Activated CD4-positive, alpha-beta memory T cell treated with anti-CD3 and anti-CD28 coated beads, Interleukin-2, amount 10 ng/mL, durations not matched to agents 7 days and 5 days (primary cell): ENCODE measurements at regions of chr6 and their contacts with region 1.

Region 1: DNA sequence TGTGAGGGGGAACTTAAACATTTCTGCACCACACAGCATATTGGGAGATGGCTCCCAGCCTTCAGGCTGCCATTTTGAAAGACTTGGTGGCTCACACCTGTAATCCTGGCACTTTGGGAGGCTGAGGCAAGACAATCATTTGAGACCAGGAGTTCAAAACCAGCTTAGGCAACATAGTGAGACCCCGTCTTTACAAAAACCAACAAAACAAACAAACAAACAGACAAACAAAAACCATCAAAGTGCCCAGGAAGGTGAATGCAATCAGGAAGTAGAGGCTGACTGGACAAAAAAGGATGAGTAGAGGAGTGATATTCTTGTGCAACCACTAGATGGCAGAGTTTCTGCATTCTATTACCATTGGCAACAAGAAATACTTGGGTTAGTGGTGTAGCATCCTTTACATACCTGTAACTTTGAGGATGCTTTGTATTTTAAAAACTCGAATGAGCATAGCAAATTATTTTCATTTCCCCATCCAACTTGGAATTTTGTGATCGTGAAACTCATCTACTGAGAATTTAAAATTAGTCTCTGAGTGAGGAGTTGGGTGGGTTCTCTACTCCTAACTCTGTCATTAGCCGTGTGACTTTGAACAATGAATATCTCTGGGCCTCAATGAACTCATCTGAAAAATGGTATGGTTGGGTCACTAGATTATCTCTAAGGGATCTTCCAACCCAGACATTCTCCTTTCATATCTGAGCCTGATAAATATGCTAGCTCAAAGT is 84.4 kb downstream of the CRYBG1 start:
- DNase-seq: no peak
- H3K4me3 Mint-ChIP-seq: no peak overlapping the region
- H3K27ac Mint-ChIP-seq: no peak overlapping the region
- H3K4me1 Mint-ChIP-seq: peaks cover 18% of the 10 kb centered on the region
- H3K27me3 Mint-ChIP-seq: peaks cover 33% of the 10 kb centered on the region

Region 2: GRCh38 chr6:106339334-106340029 is 105.5 kb before region 1 on chr6:
- CTCF ChIA-PET with region 1: interaction called, 16 read pairs
- POLR2A ChIA-PET with region 1: interaction called, 3 read pairs
- DNase-seq: peak; percentile 54
- H3K4me3 Mint-ChIP-seq: no peak overlapping the region
- H3K27ac Mint-ChIP-seq: no peak overlapping the region
- H3K4me1 Mint-ChIP-seq: peaks cover 4% of the 10 kb centered on the region
- H3K27me3 Mint-ChIP-seq: peaks cover 23% of the 10 kb centered on the region

Region 3: DNA sequence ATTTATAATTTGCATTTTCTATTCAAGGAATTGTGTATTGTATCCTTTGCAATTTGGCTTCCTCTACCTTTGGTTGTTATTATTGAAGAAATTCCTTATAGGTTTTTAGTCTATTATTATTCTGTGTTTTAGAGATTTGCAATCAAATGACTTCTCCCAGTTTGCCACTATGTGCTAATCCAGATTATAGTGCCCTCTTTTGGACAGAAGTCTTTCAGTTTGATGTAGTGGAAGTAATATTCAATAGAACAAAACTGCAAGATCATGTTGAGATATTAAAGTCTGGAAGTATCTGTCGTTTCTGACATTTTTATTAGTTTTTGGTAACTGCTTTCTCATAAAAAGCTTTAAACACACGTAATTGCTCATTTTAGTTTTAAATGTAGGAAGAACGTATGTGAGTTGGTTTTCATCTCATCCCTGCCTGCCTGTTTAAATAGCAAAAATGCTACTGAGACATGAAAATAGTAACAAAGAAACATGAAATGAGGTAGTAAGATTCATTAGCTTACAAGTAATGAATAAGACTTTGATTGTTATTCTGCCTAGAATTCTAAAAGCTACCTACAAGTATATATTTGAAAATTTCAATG is 111.5 kb after region 1 on chr6:
- CTCF ChIA-PET with region 1: interaction called, 146 read pairs
- POLR2A ChIA-PET with region 1: no interaction called
- DNase-seq: no peak
- H3K4me3 Mint-ChIP-seq: no peak overlapping the region
- H3K27ac Mint-ChIP-seq: no peak overlapping the region
- H3K4me1 Mint-ChIP-seq: peaks cover 26% of the 10 kb centered on the region
- H3K27me3 Mint-ChIP-seq: no peaks in the 10 kb centered on the region

Region 4: DNA sequence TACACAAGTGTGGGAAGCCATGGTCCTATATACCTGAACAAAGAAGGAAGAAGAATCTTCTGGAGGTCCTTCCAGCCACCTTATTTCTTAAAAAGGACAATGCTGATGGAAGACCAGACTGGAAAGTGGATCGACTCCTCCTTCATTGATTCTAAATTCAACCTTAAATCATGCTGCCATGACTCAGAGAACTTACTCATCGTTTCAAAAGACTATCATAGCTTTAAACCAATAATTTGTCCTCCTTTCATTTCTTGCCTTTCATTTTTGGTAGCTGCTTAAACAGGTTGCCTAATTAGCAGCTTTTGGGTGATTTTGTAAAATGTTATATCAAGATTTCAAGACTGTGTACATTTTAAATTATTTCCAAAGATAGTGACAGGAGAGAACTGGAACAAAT is 123.6 kb after region 1 on chr6:
- CTCF ChIA-PET with region 1: interaction called, 146 read pairs
- POLR2A ChIA-PET with region 1: interaction called, 3 read pairs
- DNase-seq: no peak
- H3K4me3 Mint-ChIP-seq: no peak overlapping the region
- H3K27ac Mint-ChIP-seq: no peak overlapping the region
- H3K4me1 Mint-ChIP-seq: peaks cover 1% of the 10 kb centered on the region
- H3K27me3 Mint-ChIP-seq: no peaks in the 10 kb centered on the region

Region 5: GRCh38 chr6:106979427-106979884 is 534.5 kb after region 1 on chr6:
- CTCF ChIA-PET with region 1: interaction called, 42 read pairs
- POLR2A ChIA-PET with region 1: no interaction called
- DNase-seq: peak; percentile 82
- H3K4me3 Mint-ChIP-seq: no peak overlapping the region
- H3K27ac Mint-ChIP-seq: no peak overlapping the region
- H3K4me1 Mint-ChIP-seq: peaks cover 8% of the 10 kb centered on the region
- H3K27me3 Mint-ChIP-seq: peaks cover 40% of the 10 kb centered on the region